B cell (primary cell): ENCODE measurements at regions of chr9 and their contacts with region 1.

Region 1: DNA sequence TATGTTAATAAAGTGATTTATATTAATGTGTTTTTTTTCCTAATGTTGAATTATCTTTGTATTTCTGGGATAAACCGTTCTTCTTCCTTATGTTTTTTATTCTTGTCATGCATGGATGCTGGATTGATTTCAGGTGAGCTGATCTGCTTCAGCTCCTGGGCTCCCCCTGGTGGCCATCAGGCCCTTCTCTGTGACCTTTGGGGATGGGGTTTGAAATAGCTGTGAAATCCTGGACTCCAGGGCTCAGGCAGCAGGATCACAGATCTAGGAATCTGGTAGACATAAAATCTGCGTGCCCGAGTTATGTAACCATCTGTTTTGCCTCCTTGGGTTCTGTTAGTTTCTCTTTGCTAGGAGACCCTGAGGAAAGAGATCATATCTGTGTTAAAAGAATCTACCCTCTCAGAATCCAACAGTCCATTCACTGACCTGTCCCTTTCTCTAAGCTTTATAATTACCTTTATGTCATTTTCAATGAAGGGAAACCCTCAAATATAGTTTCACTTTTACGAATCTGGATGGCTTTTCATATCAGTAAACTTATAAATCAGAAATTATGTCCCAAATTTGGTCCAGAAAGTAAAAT is 12.2 kb upstream of the OR13J1 start:
- DNase-seq: peak; percentile 84
- ATAC-seq: peak; percentile 66
- H3K4me3 ChIP-seq: no peak overlapping the region
- H3K4me3 Mint-ChIP-seq: no peak overlapping the region
- H3K27ac ChIP-seq: no peak overlapping the region
- H3K27ac Mint-ChIP-seq: no peak overlapping the region
- H3K4me1 ChIP-seq: no peaks in the 10 kb centered on the region
- H3K4me1 Mint-ChIP-seq: no peaks in the 10 kb centered on the region
- H3K27me3 ChIP-seq: peaks cover 0 to 3% (median 0%) of the 10 kb centered on the region in 4 experiments
- H3K27me3 Mint-ChIP-seq: peaks cover 17% of the 10 kb centered on the region
- CTCF ChIP-seq: peak; percentile 99

Region 2: DNA sequence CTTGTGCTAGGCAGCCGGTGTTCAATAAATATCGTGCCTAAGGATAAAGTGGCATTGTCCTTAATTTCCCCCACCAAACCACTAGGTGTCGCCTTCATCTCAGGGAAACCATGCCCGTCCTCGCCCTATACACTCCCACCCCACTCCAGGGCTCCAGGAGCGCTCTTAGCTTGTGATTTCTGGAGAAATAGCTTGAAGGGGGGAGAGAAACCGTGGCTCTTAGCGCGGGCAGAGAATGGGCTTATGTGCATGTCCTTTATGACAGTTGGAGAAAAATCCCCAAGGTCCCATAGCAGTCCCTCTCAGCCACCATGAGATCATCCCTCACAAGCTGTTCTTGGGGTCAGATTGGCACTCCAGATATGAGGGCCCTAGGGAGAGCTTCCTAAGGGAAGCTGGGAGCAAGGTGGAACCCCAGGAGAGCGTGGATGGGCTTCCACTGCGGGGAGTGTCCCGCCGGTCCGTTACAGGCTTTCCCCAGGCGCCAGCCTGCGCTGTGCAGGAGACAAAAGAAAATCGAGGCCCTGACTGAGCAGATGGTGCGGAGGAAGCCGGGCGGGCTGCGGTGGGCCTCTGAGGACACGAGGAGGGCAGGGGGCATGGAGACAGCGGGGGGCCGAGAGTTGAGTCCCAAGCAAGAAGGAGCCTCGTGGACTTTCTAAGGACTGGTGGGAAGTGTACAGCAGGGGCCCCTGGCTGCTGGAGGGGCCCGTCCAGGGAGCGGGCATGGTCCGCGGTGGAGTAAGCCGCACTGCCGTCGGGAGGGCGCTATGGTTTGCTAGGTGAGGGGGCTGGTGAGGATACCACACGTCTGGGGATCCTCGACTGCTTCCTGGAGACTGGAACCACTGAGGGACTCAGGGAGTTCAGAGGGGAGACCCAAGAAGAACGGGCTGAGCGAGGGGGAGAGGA is 91.7 kb before region 1 on chr9:
- CTCF ChIA-PET with region 1: interaction called, 176 read pairs
- POLR2A ChIA-PET with region 1: no interaction called
- intact Hi-C with region 1: loop called (anchors 1 kb)
- DNase-seq: peak; percentile 79
- ATAC-seq: peak; percentile 92
- H3K4me3 ChIP-seq: no peak overlapping the region
- H3K4me3 Mint-ChIP-seq: peak overlapping the region; percentile 41
- H3K27ac ChIP-seq: no peak overlapping the region
- H3K27ac Mint-ChIP-seq: peak overlapping the region; percentile 26
- H3K4me1 ChIP-seq: peaks cover 5% of the 10 kb centered on the region in 2 donors
- H3K4me1 Mint-ChIP-seq: peaks cover 9% of the 10 kb centered on the region
- H3K27me3 ChIP-seq: peaks cover 0 to 6% (median 3%) of the 10 kb centered on the region in 4 experiments
- H3K27me3 Mint-ChIP-seq: peaks cover 4% of the 10 kb centered on the region
- CTCF ChIP-seq: peak; percentile 93

Region 3: DNA sequence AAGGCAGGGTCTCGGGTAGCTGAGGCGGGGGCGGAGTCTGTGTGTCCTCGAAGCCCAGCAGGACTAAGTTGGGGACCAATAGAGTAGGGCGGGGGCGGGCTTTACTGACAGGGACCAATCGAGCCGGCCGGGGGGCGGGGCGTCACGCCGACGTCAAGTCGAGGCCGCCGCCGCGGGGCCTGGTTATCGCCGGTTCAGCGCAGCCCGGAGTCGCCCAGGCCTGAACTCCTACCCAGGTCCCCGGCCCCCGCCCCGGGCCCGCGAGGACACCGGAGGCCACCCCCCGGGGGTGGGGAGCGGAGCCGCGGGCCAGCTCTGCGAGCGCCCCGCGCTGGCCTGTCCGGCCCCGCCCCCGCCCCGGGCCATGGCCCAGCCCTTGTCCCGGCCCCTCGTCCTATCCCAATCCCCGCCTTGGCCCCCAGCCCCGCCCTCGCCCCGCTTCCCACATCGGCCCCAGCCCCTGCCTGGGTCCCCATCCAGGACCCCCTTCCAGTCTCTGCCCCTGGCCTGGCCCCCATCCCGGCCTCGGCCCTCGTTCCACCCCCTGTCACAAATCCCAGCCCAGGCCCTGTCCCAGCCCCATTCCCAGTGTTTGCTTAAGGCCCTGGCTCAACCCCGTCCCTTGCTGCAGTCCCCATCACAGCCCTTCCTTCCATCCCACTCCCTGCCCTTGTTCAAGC is 53.1 kb before region 1 on chr9 and contains the start of gene TMEM8B:
- CTCF ChIA-PET with region 1: interaction called, 141 read pairs
- POLR2A ChIA-PET with region 1: no interaction called
- intact Hi-C with region 1: loop called (anchors 1 kb)
- DNase-seq: peak; percentile 94
- ATAC-seq: peak; percentile 92
- H3K4me3 ChIP-seq: peak within 1 kb of the TSS; percentile 32 to 80 (median 78)
- H3K4me3 Mint-ChIP-seq: peak within 1 kb of the TSS; percentile 96
- H3K27ac ChIP-seq: peak within 1 kb of the TSS; percentile 60 to 78
- H3K27ac Mint-ChIP-seq: peak within 1 kb of the TSS; percentile 89
- H3K4me1 ChIP-seq: peaks cover 24 to 35% of the 10 kb centered on the region in 2 donors
- H3K4me1 Mint-ChIP-seq: peaks cover 44% of the 10 kb centered on the region
- H3K27me3 ChIP-seq: no peaks in the 10 kb centered on the region
- H3K27me3 Mint-ChIP-seq: no peaks in the 10 kb centered on the region
- CTCF ChIP-seq: no peak
- total RNA-seq, gene TMEM8B: 13.6 and 14.5 TPM in 2 replicates

Region 4: GRCh38 chr9:35844716-35845270 is 37.6 kb before region 1 on chr9:
- CTCF ChIA-PET with region 1: interaction called, 11 read pairs
- POLR2A ChIA-PET with region 1: no interaction called
- intact Hi-C with region 1: loop called (anchors 5 kb)
- DNase-seq: peak; percentile 84
- ATAC-seq: peak; percentile 75
- H3K4me3 ChIP-seq: peak overlapping the region in 1 of 5 experiments; percentile 21
- H3K4me3 Mint-ChIP-seq: peak overlapping the region; percentile 29
- H3K27ac ChIP-seq: peak overlapping the region in 1 of 2 donors; percentile 11
- H3K27ac Mint-ChIP-seq: peak overlapping the region; percentile 23
- H3K4me1 ChIP-seq: peaks cover 71 to 82% of the 10 kb centered on the region in 2 donors
- H3K4me1 Mint-ChIP-seq: peaks cover 75% of the 10 kb centered on the region
- H3K27me3 ChIP-seq: no peaks in the 10 kb centered on the region
- H3K27me3 Mint-ChIP-seq: no peaks in the 10 kb centered on the region
- CTCF ChIP-seq: no peak

Region 5: GRCh38 chr9:35859310-35859989 is 22.9 kb before region 1 on chr9:
- CTCF ChIA-PET with region 1: interaction called, 10 read pairs
- POLR2A ChIA-PET with region 1: no interaction called
- intact Hi-C with region 1: no loop called
- DNase-seq: peak; percentile 45
- ATAC-seq: peak; percentile 76
- H3K4me3 ChIP-seq: no peak overlapping the region
- H3K4me3 Mint-ChIP-seq: no peak overlapping the region
- H3K27ac ChIP-seq: no peak overlapping the region
- H3K27ac Mint-ChIP-seq: no peak overlapping the region
- H3K4me1 ChIP-seq: no peaks in the 10 kb centered on the region
- H3K4me1 Mint-ChIP-seq: no peaks in the 10 kb centered on the region
- H3K27me3 ChIP-seq: peaks cover 0 to 12% (median 3%) of the 10 kb centered on the region in 4 experiments
- H3K27me3 Mint-ChIP-seq: peaks cover 22% of the 10 kb centered on the region
- CTCF ChIP-seq: no peak

Region 6: DNA sequence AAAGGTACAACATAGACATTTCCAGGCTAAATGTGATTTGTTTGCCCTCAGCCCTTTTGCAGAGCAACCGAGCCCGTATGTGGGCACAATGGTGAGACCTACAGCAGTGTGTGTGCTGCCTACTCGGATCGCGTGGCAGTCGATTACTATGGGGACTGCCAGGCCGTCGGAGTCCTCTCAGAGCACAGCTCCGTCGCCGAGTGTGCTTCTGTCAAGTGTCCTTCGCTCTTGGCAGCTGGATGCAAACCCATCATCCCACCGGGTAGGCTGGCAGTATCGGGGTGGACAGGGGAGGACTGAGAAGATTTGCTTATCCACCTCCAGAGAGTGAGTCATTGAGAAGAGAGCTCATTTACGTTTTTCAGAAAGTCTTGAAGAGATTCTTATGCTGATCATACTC is 236.3 kb after region 1 on chr9:
- CTCF ChIA-PET with region 1: no interaction called
- POLR2A ChIA-PET with region 1: no interaction called
- intact Hi-C with region 1: no loop called
- DNase-seq: no peak
- ATAC-seq: no peak
- H3K4me3 ChIP-seq: no peak overlapping the region
- H3K4me3 Mint-ChIP-seq: no peak overlapping the region
- H3K27ac ChIP-seq: no peak overlapping the region
- H3K27ac Mint-ChIP-seq: no peak overlapping the region
- H3K4me1 ChIP-seq: no peaks in the 10 kb centered on the region
- H3K4me1 Mint-ChIP-seq: no peaks in the 10 kb centered on the region
- H3K27me3 ChIP-seq: no peaks in the 10 kb centered on the region
- H3K27me3 Mint-ChIP-seq: no peaks in the 10 kb centered on the region
- CTCF ChIP-seq: no peak